Panc1 (cell line): ENCODE measurements at regions of chr2 and their contacts with region 1.

Region 1: DNA sequence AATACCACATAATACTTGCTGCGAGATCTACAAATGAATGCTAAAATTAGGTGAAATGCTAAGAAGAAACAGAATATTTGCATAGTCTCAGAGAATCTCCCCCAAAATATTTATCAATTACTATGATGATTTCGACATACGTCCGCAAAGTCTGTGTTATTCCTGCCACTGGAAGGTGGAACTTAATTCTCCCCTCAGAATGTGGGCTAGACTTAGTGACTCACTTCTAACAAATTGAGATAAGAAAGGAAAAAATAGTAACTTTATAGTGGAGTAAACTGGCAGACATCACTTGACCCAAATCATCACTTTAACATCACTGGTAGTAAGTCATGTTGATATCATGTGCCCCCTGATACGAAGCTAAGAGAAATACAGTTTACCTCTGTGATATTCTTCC is 23.4 kb downstream of the HADHB start:
- DNase-seq: no peak
- ATAC-seq: no peak
- H3K4me3 ChIP-seq: no peak overlapping the region
- H3K27ac ChIP-seq: no peak overlapping the region
- H3K4me1 ChIP-seq: no peaks in the 10 kb centered on the region
- H3K27me3 ChIP-seq: no peaks in the 10 kb centered on the region
- CTCF ChIP-seq: no peak

Region 2: DNA sequence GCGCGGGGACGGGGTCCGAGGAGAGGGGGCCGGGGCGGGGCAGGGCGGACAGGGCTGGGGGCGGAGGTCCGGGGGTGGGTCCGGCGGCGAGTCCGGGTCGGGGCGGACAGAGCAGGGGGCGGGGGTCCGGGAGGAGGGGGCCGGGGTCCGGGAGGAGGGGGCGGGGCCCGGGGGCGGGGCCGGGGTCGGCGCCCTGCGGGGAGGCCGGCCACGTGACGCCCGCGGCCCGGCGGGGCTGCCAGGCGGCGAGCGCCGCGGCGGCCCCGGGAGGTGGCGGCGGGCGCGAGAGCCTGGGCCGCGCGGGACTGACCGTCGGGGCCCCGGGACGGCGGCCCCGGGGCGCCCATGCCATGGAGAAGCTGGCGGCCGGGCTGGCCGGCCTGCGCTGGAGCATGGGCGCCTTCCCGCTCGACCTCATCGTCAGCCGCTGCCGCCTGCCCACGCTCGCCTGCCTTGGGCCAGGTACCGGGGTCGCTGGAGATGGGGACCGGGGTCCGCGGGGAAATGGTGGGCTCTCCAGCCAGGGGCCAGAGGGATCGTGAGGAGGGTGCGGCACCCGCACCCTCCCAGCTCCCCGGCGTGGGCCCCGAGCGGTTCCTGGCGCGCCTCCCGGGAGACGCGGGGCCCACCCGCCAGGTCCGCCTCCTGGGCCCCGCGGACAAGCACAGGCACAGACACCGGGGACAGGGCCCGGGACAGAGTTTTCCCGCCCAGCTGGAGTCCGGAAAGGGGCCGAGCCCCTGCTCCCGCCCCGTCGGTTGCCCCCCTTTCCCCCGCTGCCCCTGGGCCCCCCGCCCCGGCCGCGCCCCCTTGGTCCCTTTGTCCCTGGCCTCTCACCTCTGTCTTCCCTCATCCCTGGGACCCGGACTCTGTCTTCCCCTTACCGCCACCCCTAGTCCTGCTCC is 95.1 kb before region 1 on chr2 and contains the start of gene GAREM2:
- CTCF ChIA-PET with region 1: no interaction called
- POLR2A ChIA-PET with region 1: interaction called, 23 read pairs
- in situ Hi-C with region 1: no loop called
- intact Hi-C with region 1: no loop called
- DNase-seq: no peak
- ATAC-seq: peak; percentile 55
- H3K4me3 ChIP-seq: peak within 1 kb of the TSS; percentile 47 to 54
- H3K27ac ChIP-seq: no peak within 1 kb of the TSS
- H3K4me1 ChIP-seq: peaks cover 6% of the 10 kb centered on the region
- H3K27me3 ChIP-seq: no peaks in the 10 kb centered on the region
- CTCF ChIP-seq: no peak
- total RNA-seq, gene GAREM2: 12.4 TPM

Region 3: GRCh38 chr2:26251893-26252292 is 16.3 kb before region 1 on chr2:
- CTCF ChIA-PET with region 1: no interaction called
- POLR2A ChIA-PET with region 1: no interaction called
- in situ Hi-C with region 1: no loop called
- intact Hi-C with region 1: no loop called
- DNase-seq: no peak
- ATAC-seq: no peak
- H3K4me3 ChIP-seq: no peak overlapping the region
- H3K27ac ChIP-seq: no peak overlapping the region
- H3K4me1 ChIP-seq: peaks cover 8% of the 10 kb centered on the region
- H3K27me3 ChIP-seq: no peaks in the 10 kb centered on the region
- CTCF ChIP-seq: no peak

Region 4: DNA sequence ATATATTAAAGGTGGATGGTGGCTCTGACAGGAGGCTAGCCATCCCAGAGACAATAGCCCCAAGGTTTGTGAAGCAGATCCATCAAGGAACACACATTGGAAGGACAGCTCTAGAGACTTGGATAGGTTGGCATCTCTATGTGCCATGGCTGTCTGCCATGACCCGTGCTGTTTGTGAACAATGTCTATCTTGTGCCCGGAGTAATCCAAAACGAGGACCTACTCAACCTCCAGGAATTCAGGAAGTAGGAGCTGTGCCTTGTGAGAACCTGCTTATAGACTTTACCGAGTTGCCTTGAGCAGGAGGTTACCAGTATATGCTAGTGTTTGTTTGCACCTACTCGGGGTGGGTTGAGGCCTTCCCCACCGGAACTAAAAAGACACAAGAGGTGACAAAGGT is 34.7 kb after region 1 on chr2:
- CTCF ChIA-PET with region 1: no interaction called
- POLR2A ChIA-PET with region 1: no interaction called
- in situ Hi-C with region 1: no loop called
- intact Hi-C with region 1: no loop called
- DNase-seq: no peak
- ATAC-seq: no peak
- H3K4me3 ChIP-seq: no peak overlapping the region
- H3K27ac ChIP-seq: no peak overlapping the region
- H3K4me1 ChIP-seq: peaks cover 5% of the 10 kb centered on the region
- H3K27me3 ChIP-seq: no peaks in the 10 kb centered on the region
- CTCF ChIP-seq: no peak

Region 5: DNA sequence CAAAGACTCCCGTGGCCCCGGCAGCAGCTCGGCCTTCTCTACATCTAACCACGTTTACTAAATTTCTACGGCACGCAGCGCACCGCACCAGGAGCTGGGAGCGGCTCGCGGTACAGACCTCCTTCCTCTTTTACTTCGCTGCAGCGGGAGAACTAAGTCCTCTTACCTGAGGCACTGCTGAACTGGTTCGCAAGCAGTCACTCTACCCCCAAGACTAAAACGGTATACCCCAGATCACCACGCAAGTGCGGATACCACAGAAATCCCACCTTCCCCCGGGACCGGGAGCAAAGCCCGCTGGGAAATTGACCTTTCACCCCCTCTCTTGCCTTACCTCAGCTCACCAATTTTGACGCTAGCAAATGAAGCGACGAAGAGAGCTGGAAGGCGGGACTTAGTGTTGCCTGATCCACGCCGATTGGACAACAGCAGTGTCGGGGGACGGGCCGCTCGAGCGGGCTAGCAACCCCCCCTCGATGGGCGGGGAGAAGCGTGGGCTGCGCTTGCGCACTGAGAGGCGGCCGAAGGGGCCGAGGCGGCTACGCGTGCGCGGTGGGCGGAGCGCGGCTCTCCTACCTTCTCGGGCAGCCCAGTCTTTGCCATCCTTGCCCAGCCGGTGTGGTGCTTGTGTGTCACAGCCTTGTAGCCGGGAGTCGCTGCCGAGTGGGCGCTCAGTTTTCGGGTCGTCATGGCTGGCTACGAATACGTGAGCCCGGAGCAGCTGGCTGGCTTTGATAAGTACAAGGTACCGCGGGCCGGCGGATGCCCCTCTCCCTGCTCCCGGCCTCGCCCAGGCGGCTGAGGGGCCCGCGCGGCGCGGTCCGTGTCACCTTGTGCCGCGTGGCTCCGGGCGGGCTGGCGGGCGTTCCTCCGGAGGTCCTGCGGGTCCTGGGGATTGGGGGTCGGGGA is 77.6 kb after region 1 on chr2 and contains the start of gene SELENOI:
- CTCF ChIA-PET with region 1: no interaction called
- POLR2A ChIA-PET with region 1: no interaction called
- in situ Hi-C with region 1: no loop called
- intact Hi-C with region 1: no loop called
- DNase-seq: peak; percentile 98
- ATAC-seq: peak; percentile 99
- H3K4me3 ChIP-seq: peak within 1 kb of the TSS; percentile 83 to 98
- H3K27ac ChIP-seq: peak within 1 kb of the TSS; percentile 97
- H3K4me1 ChIP-seq: peaks cover 27% of the 10 kb centered on the region
- H3K27me3 ChIP-seq: no peaks in the 10 kb centered on the region
- CTCF ChIP-seq: no peak
- total RNA-seq, gene SELENOI: 28.5 TPM